GM23248 (cell line): ENCODE measurements at regions of chrX and their contacts with region 1.

Region 1: DNA sequence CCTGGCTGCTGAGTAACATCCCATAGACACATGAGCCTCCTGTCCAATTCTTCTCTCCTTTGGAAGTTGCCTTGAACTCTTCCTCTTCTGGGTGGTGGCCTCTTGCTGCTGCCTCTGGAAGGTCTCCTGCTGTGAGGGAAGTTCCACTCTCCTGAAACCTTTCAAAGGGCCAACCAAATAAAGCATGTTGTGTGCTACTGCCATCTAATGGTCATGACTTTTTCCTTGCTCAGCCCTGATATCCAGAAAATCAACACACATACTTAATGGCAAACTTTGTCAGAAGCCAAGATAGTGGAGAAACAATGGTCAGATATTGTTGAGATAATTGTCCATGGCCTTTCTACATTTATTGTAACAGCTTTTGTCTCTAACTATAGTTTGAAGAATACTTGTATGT is 19.1 kb upstream of the ZXDA start:
- DNase-seq: peak; percentile 45
- H3K4me3 ChIP-seq: no peak overlapping the region
- H3K27ac ChIP-seq: no peak overlapping the region
- H3K4me1 ChIP-seq: no peaks in the 10 kb centered on the region
- H3K27me3 ChIP-seq: no peaks in the 10 kb centered on the region

Region 2: DNA sequence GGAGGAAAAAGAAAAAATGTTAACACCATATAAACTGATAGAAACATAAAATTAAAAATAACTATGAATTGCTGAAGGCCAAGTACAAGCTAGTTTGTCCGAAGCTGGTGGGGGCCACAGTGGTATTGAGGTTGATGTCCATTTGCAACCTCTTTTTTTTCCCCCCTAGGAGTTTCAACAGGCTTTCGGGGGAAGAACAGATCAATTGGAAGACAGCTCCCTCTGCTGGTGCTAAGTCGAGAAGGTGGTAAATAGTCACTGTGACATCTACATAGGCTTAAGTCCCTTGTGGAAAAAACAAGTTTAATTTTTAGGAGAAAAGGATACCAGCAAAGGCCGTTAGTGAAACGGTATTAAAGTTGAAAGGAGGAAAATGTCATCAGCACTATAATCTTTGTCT is 96.6 kb after region 1 on chrX:
- in situ Hi-C with region 1: loop called (anchors 25 kb)
- DNase-seq: peak; percentile 47
- H3K4me3 ChIP-seq: no peak overlapping the region
- H3K27ac ChIP-seq: no peak overlapping the region
- H3K4me1 ChIP-seq: no peaks in the 10 kb centered on the region
- H3K27me3 ChIP-seq: no peaks in the 10 kb centered on the region